Lower leg skin (tissue), 4 donors: ENCODE measurements at regions of chr10 and their contacts with region 1.

Region 1: GRCh38 chr10:18554479-18554878 is 96.9 kb downstream of the NSUN6 start:
- DNase-seq: no peak
- H3K4me3 ChIP-seq: no peak overlapping the region
- CTCF ChIP-seq: no peak
- POLR2A ChIP-seq: no peak

Region 2: GRCh38 chr10:18087355-18087754 is 467.1 kb before region 1 on chr10:
- intact Hi-C with region 1: no loop called
- DNase-seq: no peak
- H3K4me3 ChIP-seq: no peak overlapping the region
- CTCF ChIP-seq: no peak
- POLR2A ChIP-seq: no peak

Region 3: DNA sequence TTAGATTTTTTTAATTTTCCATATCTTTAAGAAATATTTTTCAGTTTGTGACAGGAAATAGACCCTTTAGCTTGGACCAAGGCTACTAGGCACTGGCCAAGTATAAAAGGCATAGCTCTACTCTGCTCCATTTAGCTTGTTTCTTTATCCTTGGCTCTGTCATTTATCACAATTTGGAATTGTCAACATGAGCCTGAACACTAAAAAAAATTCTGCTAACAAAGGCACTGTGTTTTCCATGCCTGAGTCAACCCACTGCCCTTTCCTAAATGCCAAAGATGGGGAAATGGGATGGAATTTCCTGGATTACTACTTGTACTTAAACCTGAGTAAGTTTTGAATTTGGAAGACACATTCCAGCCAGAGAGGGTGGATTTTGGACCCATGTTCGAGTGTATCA is 31.5 kb before region 1 on chr10:
- intact Hi-C with region 1: loop called (anchors 1 kb)
- DNase-seq: no peak
- H3K4me3 ChIP-seq: no peak overlapping the region
- CTCF ChIP-seq: no peak
- POLR2A ChIP-seq: no peak